ENCODE measurements at regions of chr17 and their contacts with region 1.

Region 1: GRCh38 chr17:67559377-67559966 is 158.3 kb upstream of the NOL11 start:
- DNase-seq: no peak
- ATAC-seq: peak in 2 of 4 donors; percentile 32 to 74
- H3K4me3 ChIP-seq: no peak overlapping the region
- H3K27ac ChIP-seq: no peak overlapping the region
- H3K4me1 ChIP-seq: peaks cover 6% of the 10 kb centered on the region
- H3K27me3 ChIP-seq: no peaks in the 10 kb centered on the region
- CTCF ChIP-seq: no peak

Region 2: DNA sequence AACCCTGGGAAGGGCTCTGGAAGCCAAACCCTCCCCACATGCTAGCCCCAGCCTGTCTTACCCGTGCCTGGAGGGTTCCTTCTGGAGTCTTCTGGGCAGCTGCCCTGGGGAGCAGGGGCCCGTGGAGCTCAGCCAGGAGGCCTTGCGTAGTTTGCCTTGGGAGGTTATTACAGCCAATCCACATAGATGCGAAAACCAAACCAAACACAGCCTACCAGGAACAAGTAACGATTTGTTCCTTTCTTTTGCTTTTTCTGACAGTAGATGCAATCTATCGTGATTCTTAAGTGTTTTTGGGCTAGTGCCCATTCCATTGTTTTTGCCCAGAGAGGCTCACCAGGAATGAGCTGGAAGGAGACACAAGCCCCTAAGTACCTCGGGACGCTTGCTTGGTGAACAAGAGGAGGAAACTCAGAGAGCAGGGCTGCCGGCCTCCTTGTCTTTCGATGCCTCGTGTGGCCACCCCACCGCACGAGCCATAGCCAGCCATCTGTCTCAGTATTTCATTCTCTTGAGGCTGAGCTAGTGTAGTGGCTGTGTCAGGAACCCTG is 55.6 kb after region 1 on chr17:
- intact Hi-C with region 1: loop called in 1 of 2 experiments (anchors 5 kb)
- DNase-seq: peak in 1 of 2 donors; percentile 52
- ATAC-seq: no peak
- H3K4me3 ChIP-seq: no peak overlapping the region
- H3K27ac ChIP-seq: no peak overlapping the region
- H3K4me1 ChIP-seq: no peaks in the 10 kb centered on the region
- H3K27me3 ChIP-seq: no peaks in the 10 kb centered on the region
- CTCF ChIP-seq: no peak

Region 3: DNA sequence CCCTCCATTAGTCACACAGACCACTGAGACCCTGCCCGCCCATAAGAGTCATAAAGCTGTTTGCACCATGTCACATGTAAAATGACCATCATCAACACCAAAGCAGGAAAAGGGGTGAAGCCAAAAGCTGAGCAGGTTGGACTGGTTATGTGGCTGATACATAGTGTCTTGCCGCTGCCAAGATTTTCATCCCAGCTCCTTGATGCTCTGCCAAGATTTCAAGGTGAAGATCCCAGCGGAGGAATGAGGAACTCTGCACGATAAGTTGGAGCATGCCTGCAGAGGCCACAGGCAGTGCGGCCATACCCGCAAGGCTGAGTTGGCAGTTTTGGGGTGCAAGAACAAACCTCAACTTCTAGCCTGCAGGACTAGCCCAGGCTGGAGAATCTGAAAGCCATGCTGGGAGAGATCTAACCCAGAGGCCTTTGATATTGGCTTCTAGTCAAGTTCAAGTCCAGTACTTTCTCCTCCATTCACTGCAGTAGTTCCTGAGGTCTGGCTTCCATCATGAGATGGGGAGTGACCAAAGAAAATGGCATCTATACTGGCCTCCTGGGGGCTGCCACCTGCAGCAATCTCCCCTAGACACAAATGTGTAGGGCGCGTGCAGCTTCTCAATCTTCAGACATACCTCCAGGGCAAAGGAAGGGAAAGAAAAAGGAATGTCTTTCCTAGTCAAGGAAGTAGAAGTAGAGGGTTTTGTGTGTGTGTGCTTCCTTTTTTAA is 78.6 kb after region 1 on chr17:
- intact Hi-C with region 1: no loop called
- DNase-seq: no peak
- ATAC-seq: no peak
- H3K4me3 ChIP-seq: no peak overlapping the region
- H3K27ac ChIP-seq: no peak overlapping the region
- H3K4me1 ChIP-seq: no peaks in the 10 kb centered on the region
- H3K27me3 ChIP-seq: peaks cover 0 to 2% (median 0%) of the 10 kb centered on the region in 3 donors
- CTCF ChIP-seq: no peak

Region 4: GRCh38 chr17:67879662-67880061 is 320.2 kb after region 1 on chr17:
- intact Hi-C with region 1: no loop called
- DNase-seq: no peak
- ATAC-seq: peak in 1 of 4 donors; percentile 23
- H3K4me3 ChIP-seq: no peak overlapping the region
- H3K27ac ChIP-seq: no peak overlapping the region
- H3K4me1 ChIP-seq: no peaks in the 10 kb centered on the region
- H3K27me3 ChIP-seq: no peaks in the 10 kb centered on the region
- CTCF ChIP-seq: no peak

Measured in psoas muscle (tissue), 8 donors.